ENCODE measurements at regions of chr21 and their contacts with region 1.

Region 1: GRCh38 chr21:36135391-36136102 is 668 bp downstream of the CBR3 start:
- DNase-seq: peak; percentile 80
- H3K4me3 Mint-ChIP-seq: peak overlapping the region; percentile 80
- H3K27ac Mint-ChIP-seq: peak overlapping the region; percentile 91
- H3K4me1 Mint-ChIP-seq: peaks cover 45% of the 10 kb centered on the region
- H3K27me3 Mint-ChIP-seq: no peaks in the 10 kb centered on the region

Region 2: GRCh38 chr21:36060159-36060921 is 75.2 kb before region 1 on chr21 and contains the start of gene SETD4:
- CTCF ChIA-PET with region 1: no interaction called
- POLR2A ChIA-PET with region 1: interaction called, 27 read pairs
- DNase-seq: peak; percentile 90
- H3K4me3 Mint-ChIP-seq: peak within 1 kb of the TSS; percentile 96
- H3K27ac Mint-ChIP-seq: peak within 1 kb of the TSS; percentile 98
- H3K4me1 Mint-ChIP-seq: peaks cover 35% of the 10 kb centered on the region
- H3K27me3 Mint-ChIP-seq: peaks cover 2% of the 10 kb centered on the region
- total RNA-seq, gene SETD4: 15.5 to 17.4 TPM

Region 3: GRCh38 chr21:36079010-36079649 is 56.4 kb before region 1 on chr21:
- CTCF ChIA-PET with region 1: no interaction called
- POLR2A ChIA-PET with region 1: no interaction called
- DNase-seq: peak; percentile 61
- H3K4me3 Mint-ChIP-seq: peak overlapping the region; percentile 77
- H3K27ac Mint-ChIP-seq: peak overlapping the region; percentile 98
- H3K4me1 Mint-ChIP-seq: peaks cover 47% of the 10 kb centered on the region
- H3K27me3 Mint-ChIP-seq: no peaks in the 10 kb centered on the region

Region 4: GRCh38 chr21:36149788-36150711 is 14.5 kb after region 1 on chr21:
- CTCF ChIA-PET with region 1: interaction called, 27 read pairs
- POLR2A ChIA-PET with region 1: interaction called, 46 read pairs
- DNase-seq: no peak
- H3K4me3 Mint-ChIP-seq: no peak overlapping the region
- H3K27ac Mint-ChIP-seq: peak overlapping the region; percentile 74
- H3K4me1 Mint-ChIP-seq: peaks cover 51% of the 10 kb centered on the region
- H3K27me3 Mint-ChIP-seq: peaks cover 5% of the 10 kb centered on the region

Region 5: DNA sequence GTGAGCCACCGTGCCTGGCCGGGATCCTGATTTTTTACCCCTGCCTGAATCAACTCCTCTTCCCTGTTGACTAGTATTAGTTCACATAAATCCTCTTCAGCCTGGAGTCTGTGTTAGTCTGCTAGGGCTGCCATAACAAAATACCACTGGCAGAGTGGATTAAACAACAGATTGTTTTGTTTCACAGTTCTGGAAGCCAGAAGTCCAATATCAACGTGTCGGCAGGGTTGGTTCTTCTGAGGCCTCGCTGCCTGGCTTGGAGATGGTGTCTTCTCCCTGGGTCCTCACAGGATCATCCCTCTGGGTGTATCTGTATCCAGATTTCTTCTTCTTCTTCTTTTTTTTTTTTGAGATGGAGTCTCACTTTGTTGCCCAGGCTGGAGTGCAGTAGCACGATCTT is 39.2 kb after region 1 on chr21:
- CTCF ChIA-PET with region 1: interaction called, 20 read pairs
- POLR2A ChIA-PET with region 1: interaction called, 17 read pairs
- DNase-seq: no peak
- H3K4me3 Mint-ChIP-seq: no peak overlapping the region
- H3K27ac Mint-ChIP-seq: peak overlapping the region; percentile 93
- H3K4me1 Mint-ChIP-seq: peaks cover 36% of the 10 kb centered on the region
- H3K27me3 Mint-ChIP-seq: no peaks in the 10 kb centered on the region

Region 6: GRCh38 chr21:36385233-36386030 is 249.9 kb after region 1 on chr21 and contains the start of gene CHAF1B:
- CTCF ChIA-PET with region 1: no interaction called
- POLR2A ChIA-PET with region 1: interaction called, 14 read pairs
- DNase-seq: peak; percentile 85
- H3K4me3 Mint-ChIP-seq: peak within 1 kb of the TSS; percentile 83
- H3K27ac Mint-ChIP-seq: peak within 1 kb of the TSS; percentile 83
- H3K4me1 Mint-ChIP-seq: peaks cover 27% of the 10 kb centered on the region
- H3K27me3 Mint-ChIP-seq: no peaks in the 10 kb centered on the region
- total RNA-seq, gene CHAF1B: 18.8 to 23.9 TPM